ENCODE measurements at regions of chr14 and their contacts with region 1.

Region 1: DNA sequence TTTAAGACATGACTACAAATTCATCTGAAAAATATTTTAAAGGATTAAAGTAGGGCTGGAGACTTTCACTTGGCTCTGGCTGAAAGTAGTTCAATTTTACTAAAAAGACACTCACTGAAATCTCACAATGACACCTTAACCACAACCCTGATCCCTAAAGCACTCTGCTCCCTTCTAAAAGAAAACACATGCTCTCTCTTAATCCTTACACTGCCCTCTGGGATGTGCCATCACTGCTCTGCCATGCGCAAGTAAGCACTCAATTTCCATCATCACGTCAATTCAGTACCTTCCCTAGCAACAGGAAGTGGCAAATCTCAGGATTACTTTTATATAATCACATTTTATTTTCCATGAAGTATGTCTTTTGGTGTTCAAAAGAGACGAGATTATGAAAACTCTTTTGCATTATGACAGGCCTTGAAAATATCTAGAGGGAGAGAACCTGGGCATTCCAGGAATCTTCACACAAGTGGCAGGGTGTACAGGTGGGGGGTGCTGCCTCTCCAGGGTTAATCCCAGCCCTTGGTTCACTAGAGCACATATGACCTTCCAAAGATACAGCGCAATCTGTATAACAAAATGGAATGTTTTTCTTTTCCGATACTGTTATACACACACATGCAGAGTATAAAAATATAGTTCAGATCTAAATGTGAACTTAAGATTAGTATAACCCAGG is 7.3 kb downstream of the ATG14 start:
- DNase-seq: no peak
- H3K4me3 Mint-ChIP-seq: no peak overlapping the region
- H3K27ac Mint-ChIP-seq: peak overlapping the region; percentile 38
- H3K4me1 Mint-ChIP-seq: peaks cover 49% of the 10 kb centered on the region
- H3K27me3 Mint-ChIP-seq: no peaks in the 10 kb centered on the region

Region 2: GRCh38 chr14:55373784-55374705 is 30.3 kb before region 1 on chr14:
- CTCF ChIA-PET with region 1: interaction called, 4 read pairs
- POLR2A ChIA-PET with region 1: interaction called, 3 read pairs
- intact Hi-C with region 1: loop called (anchors 1 kb)
- DNase-seq: peak; percentile 45
- H3K4me3 Mint-ChIP-seq: peak overlapping the region; percentile 49
- H3K27ac Mint-ChIP-seq: peak overlapping the region; percentile 91
- H3K4me1 Mint-ChIP-seq: peaks cover 45% of the 10 kb centered on the region
- H3K27me3 Mint-ChIP-seq: no peaks in the 10 kb centered on the region

Region 3: GRCh38 chr14:55979096-55979495 is 574.8 kb after region 1 on chr14:
- CTCF ChIA-PET with region 1: no interaction called
- POLR2A ChIA-PET with region 1: no interaction called
- intact Hi-C with region 1: no loop called
- DNase-seq: no peak
- H3K4me3 Mint-ChIP-seq: no peak overlapping the region
- H3K27ac Mint-ChIP-seq: no peak overlapping the region
- H3K4me1 Mint-ChIP-seq: peaks cover 1% of the 10 kb centered on the region
- H3K27me3 Mint-ChIP-seq: peaks cover 3% of the 10 kb centered on the region

Region 4: DNA sequence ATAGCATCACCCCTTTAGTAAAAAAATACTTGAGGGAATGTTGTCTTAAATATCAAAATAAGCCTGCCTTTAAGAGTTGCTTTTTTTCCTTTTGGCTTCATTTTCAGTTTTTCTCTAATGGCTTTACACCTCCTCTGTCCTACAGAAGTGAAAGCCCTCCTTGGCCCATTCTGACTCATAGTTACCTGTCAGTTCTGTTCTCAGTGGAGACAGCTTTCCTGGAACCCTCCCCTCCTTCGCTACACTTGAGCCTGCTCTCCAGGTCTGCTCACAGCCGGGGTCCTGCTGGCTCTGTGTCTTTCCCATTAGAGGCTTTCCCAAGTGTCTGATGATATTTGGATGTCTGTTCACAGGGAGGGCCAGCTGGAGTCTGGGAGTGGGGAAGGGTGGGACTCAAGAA is 797.9 kb after region 1 on chr14:
- CTCF ChIA-PET with region 1: no interaction called
- POLR2A ChIA-PET with region 1: no interaction called
- intact Hi-C with region 1: no loop called
- DNase-seq: no peak
- H3K4me3 Mint-ChIP-seq: no peak overlapping the region
- H3K27ac Mint-ChIP-seq: no peak overlapping the region
- H3K4me1 Mint-ChIP-seq: peaks cover 8% of the 10 kb centered on the region
- H3K27me3 Mint-ChIP-seq: no peaks in the 10 kb centered on the region